RWPE1 (cell line): ENCODE measurements at regions of chr17 and their contacts with region 1.

Region 1: GRCh38 chr17:43609613-43610385 is 51.9 kb downstream of the MEOX1 start:
- DNase-seq: no peak
- H3K27ac ChIP-seq: no peak overlapping the region
- CTCF ChIP-seq: no peak

Region 2: DNA sequence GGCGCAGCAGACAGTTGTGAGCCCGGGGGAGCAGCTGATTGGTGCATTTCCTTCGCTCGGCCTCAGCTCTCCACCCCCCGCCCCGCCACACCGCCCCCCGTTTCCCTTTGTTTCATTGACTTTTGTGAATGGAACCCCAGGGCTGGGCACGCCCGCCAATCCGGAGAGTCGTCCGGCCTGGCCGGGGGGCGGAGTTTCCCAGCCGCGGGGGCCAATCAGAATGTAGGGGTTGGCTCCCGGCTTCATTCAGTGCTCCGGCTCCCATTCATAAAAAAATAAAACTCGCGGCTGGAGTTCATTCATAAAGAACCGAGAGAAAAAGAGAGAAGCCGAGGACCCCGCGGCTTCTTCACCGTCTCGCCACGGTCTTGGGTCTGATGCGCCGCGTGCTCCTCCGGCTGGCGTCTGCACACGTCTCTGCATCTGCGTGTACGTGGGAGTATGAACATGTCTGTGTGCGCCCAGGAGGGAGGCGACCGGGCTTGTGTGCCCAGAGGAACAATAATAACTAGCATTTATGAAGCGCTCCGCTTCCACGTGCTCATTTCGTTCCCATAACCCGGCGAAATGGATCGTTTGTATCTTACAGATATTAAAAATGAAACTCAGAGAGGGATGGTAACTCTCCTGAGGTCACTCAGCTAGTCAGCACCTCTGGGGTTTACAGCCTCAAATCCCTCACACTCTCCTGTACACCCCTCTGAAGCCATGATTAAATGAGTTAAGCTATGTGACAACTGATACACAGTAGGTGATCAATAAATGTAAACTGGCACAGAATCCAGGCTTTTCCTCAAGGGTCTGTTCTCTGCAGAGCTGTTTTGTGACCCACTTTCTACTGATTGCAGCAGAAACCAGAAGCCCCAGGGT is 63.2 kb before region 1 on chr17 and contains the start of gene ETV4:
- CTCF ChIA-PET with region 1: no interaction called
- POLR2A ChIA-PET with region 1: no interaction called
- DNase-seq: peak; percentile 100
- H3K27ac ChIP-seq: peak within 1 kb of the TSS; percentile 84
- CTCF ChIP-seq: no peak

Region 3: GRCh38 chr17:43701318-43701743 is 91.5 kb after region 1 on chr17:
- CTCF ChIA-PET with region 1: interaction called, 10 read pairs
- POLR2A ChIA-PET with region 1: no interaction called
- DNase-seq: no peak
- H3K27ac ChIP-seq: no peak overlapping the region
- CTCF ChIP-seq: no peak